ENCODE measurements at regions of chr21 and their contacts with region 1.

Region 1: GRCh38 chr21:33721081-33721480 is 78.8 kb downstream of the ITSN1 start:
- DNase-seq: no peak
- ATAC-seq: no peak
- H3K4me3 ChIP-seq: no peak overlapping the region
- H3K27ac ChIP-seq: no peak overlapping the region
- H3K4me1 ChIP-seq: peaks cover 4% of the 10 kb centered on the region; the same call in 1 of the 2 replicates
- H3K27me3 ChIP-seq: no peaks in the 10 kb centered on the region
- CTCF ChIP-seq: no peak

Region 2: DNA sequence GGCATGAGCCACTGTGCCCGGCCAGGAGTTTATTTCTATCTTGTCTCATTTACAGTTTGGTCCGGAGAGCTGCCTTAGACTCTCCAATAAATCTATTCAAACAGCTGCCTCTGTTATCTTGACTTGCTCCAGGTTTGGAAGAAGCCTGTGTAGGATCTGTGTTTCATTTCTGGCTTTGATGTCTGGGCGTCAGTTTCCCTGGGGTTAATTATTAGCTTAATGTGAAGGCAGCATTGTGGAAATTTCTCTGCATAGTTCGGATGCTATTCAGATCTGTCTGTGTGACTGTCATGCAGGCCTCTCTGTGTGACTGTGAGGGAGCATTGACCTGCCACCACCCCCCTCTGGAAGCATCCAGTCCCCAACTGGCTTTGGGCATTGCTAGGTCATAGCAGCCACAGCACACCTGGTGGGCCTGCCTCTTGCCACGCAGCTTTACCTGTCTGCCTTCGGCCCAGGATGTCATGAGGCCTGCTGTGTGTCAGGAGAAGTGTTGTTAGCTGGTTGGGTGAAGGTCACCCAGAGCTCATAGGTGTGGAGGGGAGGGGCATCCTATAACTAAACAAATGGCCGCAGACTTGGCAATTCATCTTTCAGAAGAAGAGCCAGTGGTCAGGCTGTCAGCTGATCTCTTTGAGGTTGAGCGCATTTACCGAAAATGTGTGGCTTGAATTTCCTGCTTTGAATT is 308.1 kb before region 1 on chr21:
- CTCF ChIA-PET with region 1: interaction called, 11 read pairs
- POLR2A ChIA-PET with region 1: no interaction called
- in situ Hi-C with region 1: no loop called
- intact Hi-C with region 1: no loop called
- DNase-seq: no peak
- ATAC-seq: peak; percentile 39; the same call in 1 of the 2 replicates
- H3K4me3 ChIP-seq: no peak overlapping the region
- H3K27ac ChIP-seq: peak overlapping the region; percentile 44; the same call in 1 of the 2 replicates
- H3K4me1 ChIP-seq: peaks cover 33% of the 10 kb centered on the region
- H3K27me3 ChIP-seq: no peaks in the 10 kb centered on the region
- CTCF ChIP-seq: no peak

Measured in Panc1 (cell line).